HCT116 (cell line): ENCODE measurements at regions of chr4 and their contacts with region 1.

Region 1: DNA sequence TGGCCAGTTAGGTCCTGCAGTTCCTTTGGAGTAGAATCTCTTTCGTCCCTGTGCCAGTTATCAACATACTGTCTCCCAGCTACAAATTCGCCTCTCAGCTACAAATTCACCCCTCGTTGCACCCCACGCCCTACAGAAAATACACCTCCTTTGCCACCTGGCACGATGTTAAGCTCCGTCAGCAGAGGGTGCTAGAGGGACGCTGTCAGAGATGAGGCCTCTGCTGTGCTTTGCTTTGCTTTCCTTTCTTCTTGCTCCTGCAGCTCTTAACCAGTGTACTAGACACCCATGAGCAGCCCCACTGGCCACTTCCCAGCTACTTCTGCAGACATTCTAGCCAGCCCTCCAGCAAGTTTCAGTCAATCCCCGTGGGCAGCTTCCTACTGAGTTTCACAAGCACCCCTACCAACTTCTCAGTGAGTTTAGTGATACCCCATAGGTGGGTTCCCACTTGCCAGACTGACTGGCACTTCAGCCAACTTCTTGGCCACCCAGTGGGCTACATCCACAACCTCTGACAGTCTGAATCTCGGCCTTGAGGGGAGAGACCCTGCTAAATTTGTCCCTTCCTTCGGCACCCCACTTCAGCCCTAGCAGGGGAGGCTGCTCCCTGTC is 21.8 kb downstream of the HAUS3 start:
- DNase-seq: peak; percentile 28
- ATAC-seq: peak; percentile 92
- H3K4me3 ChIP-seq: no peak overlapping the region
- H3K27ac ChIP-seq: no peak overlapping the region
- H3K4me1 ChIP-seq: peaks cover 0 to 7% of the 10 kb centered on the region in 2 experiments; a peak in 2 of 4 replicates
- H3K27me3 ChIP-seq: no peaks in the 10 kb centered on the region
- CTCF ChIP-seq: peak; percentile 89 to 93 (median 93)
- POLR2A ChIP-seq: no peak
- RAD21 ChIP-seq: peak; percentile 93

Region 2: DNA sequence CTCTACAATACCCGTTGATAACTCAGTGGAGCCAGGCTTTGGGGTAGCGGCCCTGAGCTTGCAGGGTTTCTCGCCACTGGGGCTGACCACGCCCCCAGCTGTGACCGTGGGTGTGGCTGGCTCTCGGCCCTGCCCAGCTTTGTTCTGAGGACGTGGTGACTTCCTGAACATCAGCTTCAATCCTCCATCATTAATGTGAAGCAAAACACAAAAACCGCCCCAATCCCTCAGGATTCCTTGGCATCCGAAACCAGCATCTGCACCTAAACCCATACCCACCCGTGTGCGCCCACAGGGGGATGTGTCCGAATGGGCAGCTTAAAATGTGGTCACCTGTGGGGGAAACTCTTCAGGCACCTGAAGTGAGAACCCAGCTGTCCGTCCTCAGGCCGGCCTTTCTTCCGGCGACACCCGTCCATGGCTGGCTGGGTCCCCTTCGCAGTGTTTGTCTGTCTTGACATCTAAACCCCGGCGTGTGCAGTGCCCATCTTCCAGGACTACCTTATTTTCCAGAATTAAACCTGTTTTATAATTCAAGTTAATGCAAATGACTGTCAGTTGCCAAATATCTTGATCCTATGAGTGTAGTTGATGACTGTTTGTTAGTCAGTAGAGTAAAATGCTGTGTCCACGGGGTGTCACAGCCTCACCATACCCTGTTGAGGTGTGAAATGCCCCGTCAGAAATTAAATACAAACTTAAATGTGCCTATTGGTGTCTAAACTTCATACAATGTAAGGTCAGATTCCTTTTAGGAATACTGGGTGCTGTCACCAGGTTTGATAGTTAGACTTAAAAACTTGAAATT is 238.7 kb before region 1 on chr4:
- CTCF ChIA-PET with region 1: no interaction called
- POLR2A ChIA-PET with region 1: no interaction called
- RAD21 ChIA-PET with region 1: no interaction called
- intact Hi-C with region 1: no loop called
- DNase-seq: peak; percentile 12
- ATAC-seq: peak; percentile 73
- H3K4me3 ChIP-seq: no peak overlapping the region
- H3K27ac ChIP-seq: peak overlapping the region; percentile 36
- H3K4me1 ChIP-seq: peaks cover 4 to 19% of the 10 kb centered on the region in 2 experiments; a peak in 2 of 4 replicates
- H3K27me3 ChIP-seq: no peaks in the 10 kb centered on the region
- CTCF ChIP-seq: no peak
- POLR2A ChIP-seq: no peak
- RAD21 ChIP-seq: no peak

Region 3: GRCh38 chr4:2231082-2231481 is 11.0 kb after region 1 on chr4:
- CTCF ChIA-PET with region 1: interaction called, 17 read pairs
- POLR2A ChIA-PET with region 1: interaction called, 3 read pairs
- RAD21 ChIA-PET with region 1: no interaction called
- intact Hi-C with region 1: no loop called
- DNase-seq: no peak
- ATAC-seq: no peak
- H3K4me3 ChIP-seq: no peak overlapping the region
- H3K27ac ChIP-seq: no peak overlapping the region
- H3K4me1 ChIP-seq: no peaks in the 10 kb centered on the region
- H3K27me3 ChIP-seq: no peaks in the 10 kb centered on the region
- CTCF ChIP-seq: no peak
- POLR2A ChIP-seq: no peak
- RAD21 ChIP-seq: no peak

Region 4: GRCh38 chr4:2241410-2242353 is 21.6 kb after region 1 on chr4 and contains the starts of genes HAUS3 and POLN:
- CTCF ChIA-PET with region 1: interaction called, 11 read pairs
- POLR2A ChIA-PET with region 1: interaction called, 3 read pairs
- RAD21 ChIA-PET with region 1: no interaction called
- intact Hi-C with region 1: no loop called
- DNase-seq: peak; percentile 95
- ATAC-seq: peak; percentile 97
- H3K4me3 ChIP-seq: peak within 1 kb of the TSS; percentile 94 to 97
- H3K27ac ChIP-seq: peak within 1 kb of the TSS; percentile 72
- H3K4me1 ChIP-seq: peaks cover 7 to 27% of the 10 kb centered on the region in 2 experiments; a peak in 3 of 4 replicates
- H3K27me3 ChIP-seq: no peaks in the 10 kb centered on the region
- CTCF ChIP-seq: no peak
- POLR2A ChIP-seq: peak; percentile 71
- RAD21 ChIP-seq: 0 out of 2 replicates have a peak, but pooled peaks have one; percentile 8
- total RNA-seq, gene HAUS3: 17.3 TPM
- total RNA-seq, gene POLN: 3.1 TPM

Region 5: GRCh38 chr4:2366252-2367192 is 146.4 kb after region 1 on chr4:
- CTCF ChIA-PET with region 1: no interaction called
- POLR2A ChIA-PET with region 1: no interaction called
- RAD21 ChIA-PET with region 1: no interaction called
- intact Hi-C with region 1: no loop called
- DNase-seq: no peak
- ATAC-seq: no peak
- H3K4me3 ChIP-seq: no peak overlapping the region
- H3K27ac ChIP-seq: no peak overlapping the region
- H3K4me1 ChIP-seq: no peaks in the 10 kb centered on the region
- H3K27me3 ChIP-seq: no peaks in the 10 kb centered on the region
- CTCF ChIP-seq: no peak
- POLR2A ChIP-seq: no peak
- RAD21 ChIP-seq: no peak

Region 6: GRCh38 chr4:2441393-2442174 is 221.5 kb after region 1 on chr4:
- CTCF ChIA-PET with region 1: interaction called, 38 read pairs
- POLR2A ChIA-PET with region 1: no interaction called
- RAD21 ChIA-PET with region 1: interaction called, 3 to 7 read pairs
- intact Hi-C with region 1: loop called (anchors 1 kb)
- DNase-seq: peak; percentile 85
- ATAC-seq: peak; percentile 99
- H3K4me3 ChIP-seq: no peak overlapping the region
- H3K27ac ChIP-seq: no peak overlapping the region; the same call in 1 of the 2 replicates
- H3K4me1 ChIP-seq: peaks cover 4 to 10% of the 10 kb centered on the region in 2 experiments; a peak in 3 of 4 replicates
- H3K27me3 ChIP-seq: no peaks in the 10 kb centered on the region
- CTCF ChIP-seq: peak; percentile 97 to 100 (median 99)
- POLR2A ChIP-seq: no peak
- RAD21 ChIP-seq: peak; percentile 90

Region 7: DNA sequence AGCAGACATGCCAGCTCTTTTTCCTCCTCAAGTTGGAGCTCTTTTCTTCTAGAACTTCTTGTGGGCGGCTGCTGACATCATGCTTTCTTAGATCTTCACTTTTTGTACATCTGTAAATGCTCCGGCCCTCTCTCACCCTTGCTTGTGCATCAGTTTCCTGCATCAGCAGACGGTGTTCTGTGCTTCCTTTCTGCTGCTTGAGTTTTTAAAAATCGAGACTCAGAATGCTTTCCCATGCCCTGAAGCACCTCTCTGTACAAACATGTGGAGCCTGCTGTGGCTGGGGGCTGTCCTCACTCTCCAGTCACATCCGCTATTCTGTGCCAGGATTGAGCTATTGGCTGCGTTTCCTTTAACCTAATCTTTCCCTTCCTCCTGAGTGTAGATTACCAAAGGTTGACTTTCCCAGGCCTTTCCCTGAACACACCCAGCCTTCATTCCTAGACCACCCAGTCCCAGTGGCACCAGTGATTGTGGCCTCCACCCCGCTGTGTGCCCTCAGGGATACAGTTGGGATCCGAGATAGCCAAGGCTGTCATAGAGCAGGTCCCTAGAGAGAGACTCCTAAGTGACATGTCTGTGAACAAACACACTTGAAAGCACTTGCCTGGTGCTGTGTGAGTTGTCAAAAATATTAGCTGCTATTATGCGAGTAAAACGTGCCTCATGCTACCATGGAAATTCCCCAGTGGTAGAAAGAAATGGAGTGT is 494.1 kb after region 1 on chr4:
- CTCF ChIA-PET with region 1: no interaction called
- POLR2A ChIA-PET with region 1: no interaction called
- RAD21 ChIA-PET with region 1: no interaction called
- intact Hi-C with region 1: loop called (anchors 10 kb)
- DNase-seq: no peak
- ATAC-seq: no peak
- H3K4me3 ChIP-seq: no peak overlapping the region
- H3K27ac ChIP-seq: no peak overlapping the region
- H3K4me1 ChIP-seq: peaks cover 14 to 28% of the 10 kb centered on the region in 2 experiments; a peak in 3 of 4 replicates
- H3K27me3 ChIP-seq: no peaks in the 10 kb centered on the region
- CTCF ChIP-seq: no peak
- POLR2A ChIP-seq: no peak
- RAD21 ChIP-seq: no peak